Thyroid gland (tissue), 4 donors: ENCODE measurements at regions of chr10 and their contacts with region 1.

Region 1: GRCh38 chr10:68560186-68560942 is at the start of gene TET1:
- DNase-seq: peak; percentile 60 to 62
- H3K4me3 ChIP-seq: peak within 1 kb of the TSS; percentile 87 to 98 (median 92)
- H3K27ac ChIP-seq: peak within 1 kb of the TSS in 1 of 3 donors; percentile 35
- H3K4me1 ChIP-seq: peaks cover 19 to 28% of the 10 kb centered on the region in 2 donors
- H3K27me3 ChIP-seq: no peaks in the 10 kb centered on the region
- CTCF ChIP-seq: no peak
- POLR2A ChIP-seq: peak in 1 of 2 donors; percentile 78
- total RNA-seq, gene TET1: 7.4 to 11.4 (median 9.7) TPM

Region 2: DNA sequence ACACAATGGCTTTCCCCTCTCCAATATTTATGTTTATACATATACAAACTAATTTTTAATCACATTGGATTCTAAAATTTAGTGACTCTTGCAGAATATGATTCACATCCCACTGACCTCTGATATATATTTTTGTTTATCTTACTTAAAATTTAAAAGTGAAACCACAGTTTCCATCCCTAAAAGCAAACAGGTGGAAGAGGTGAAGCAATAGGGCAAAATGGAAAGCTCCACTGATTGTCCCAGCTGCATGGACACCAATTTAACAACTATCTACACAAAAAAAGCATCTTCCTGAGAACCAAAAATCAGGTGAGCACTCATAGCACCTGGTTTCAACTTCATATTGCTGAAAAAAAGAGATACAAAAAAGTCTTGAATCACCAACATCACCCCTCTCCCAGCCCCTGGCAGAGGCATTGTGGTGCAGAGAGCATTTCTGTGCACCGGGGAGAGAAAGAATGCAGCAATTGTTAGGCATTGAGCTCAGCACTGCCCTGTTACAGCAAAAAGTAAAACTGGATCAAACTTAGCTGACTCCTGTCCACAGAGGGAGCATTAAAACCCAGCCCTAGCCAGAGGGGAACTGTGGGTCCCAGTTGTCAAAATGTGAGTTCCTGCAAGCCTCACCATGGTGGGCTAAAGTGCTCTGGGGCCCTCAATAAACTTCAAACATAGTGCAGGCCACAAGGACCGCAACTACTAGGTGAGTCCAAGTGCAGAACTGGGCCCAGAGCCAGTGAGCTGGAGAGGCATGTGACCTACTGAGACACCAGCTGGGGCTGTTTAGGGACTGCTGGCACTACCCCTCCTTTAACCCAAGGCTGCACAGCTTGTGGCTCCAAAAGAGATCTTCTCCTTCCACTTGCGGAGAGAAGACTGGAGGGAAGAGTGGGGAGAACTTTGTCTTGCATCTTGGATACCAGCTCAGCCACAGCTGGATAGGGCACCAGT is 583.8 kb before region 1 on chr10:
- intact Hi-C with region 1: no loop called
- DNase-seq: peak; percentile 83 to 88
- H3K4me3 ChIP-seq: no peak overlapping the region
- H3K27ac ChIP-seq: peak overlapping the region in 1 of 3 donors; percentile 4
- H3K4me1 ChIP-seq: peaks cover 5 to 6% of the 10 kb centered on the region in 2 donors
- H3K27me3 ChIP-seq: no peaks in the 10 kb centered on the region
- CTCF ChIP-seq: no peak
- POLR2A ChIP-seq: no peak

Region 3: DNA sequence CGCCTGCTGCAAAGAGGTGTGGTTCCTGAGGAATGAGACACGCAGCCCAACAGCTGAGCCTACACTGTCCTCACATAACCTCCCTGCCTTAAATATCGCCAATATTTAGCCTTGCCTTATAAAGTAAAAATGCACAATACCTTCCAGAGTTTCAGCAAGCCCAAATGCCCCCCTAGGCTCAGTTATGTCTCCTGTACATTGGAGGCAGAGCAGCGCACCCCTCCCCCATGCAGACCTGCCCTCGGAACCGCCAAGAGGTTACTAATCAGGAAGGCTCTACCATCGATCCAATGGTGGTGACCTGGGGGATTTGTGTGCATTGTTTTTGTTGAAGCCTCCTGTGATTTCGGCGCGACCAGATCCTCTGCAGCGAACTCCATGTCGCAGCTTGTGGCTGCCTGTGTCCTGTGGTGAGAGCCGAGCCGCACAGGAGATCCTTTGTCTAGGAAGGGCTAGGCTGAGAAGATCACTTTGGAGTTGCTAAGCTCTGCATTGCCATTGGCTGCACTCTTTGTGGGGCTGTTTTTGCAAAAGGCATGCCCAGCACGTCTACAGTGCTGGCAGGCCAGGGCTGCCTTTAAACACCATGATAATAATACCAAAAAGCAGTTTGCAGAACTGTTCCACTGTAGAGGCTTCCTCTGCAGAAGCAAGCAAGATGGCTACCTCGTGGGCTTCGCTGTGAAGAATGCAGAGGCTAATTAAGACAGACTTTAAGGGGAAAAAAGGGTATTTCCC is 39.8 kb after region 1 on chr10:
- intact Hi-C with region 1: loop called (anchors 5 kb)
- DNase-seq: peak; percentile 74 to 75
- H3K4me3 ChIP-seq: peak overlapping the region; percentile 2 to 41 (median 7)
- H3K27ac ChIP-seq: peak overlapping the region; percentile 7 to 62 (median 60)
- H3K4me1 ChIP-seq: peaks cover 17 to 28% of the 10 kb centered on the region in 2 donors
- H3K27me3 ChIP-seq: no peaks in the 10 kb centered on the region
- CTCF ChIP-seq: no peak
- POLR2A ChIP-seq: peak in 1 of 2 donors; percentile 55